GM23248 (cell line): ENCODE measurements at regions of chr14 and their contacts with region 1.

Region 1: DNA sequence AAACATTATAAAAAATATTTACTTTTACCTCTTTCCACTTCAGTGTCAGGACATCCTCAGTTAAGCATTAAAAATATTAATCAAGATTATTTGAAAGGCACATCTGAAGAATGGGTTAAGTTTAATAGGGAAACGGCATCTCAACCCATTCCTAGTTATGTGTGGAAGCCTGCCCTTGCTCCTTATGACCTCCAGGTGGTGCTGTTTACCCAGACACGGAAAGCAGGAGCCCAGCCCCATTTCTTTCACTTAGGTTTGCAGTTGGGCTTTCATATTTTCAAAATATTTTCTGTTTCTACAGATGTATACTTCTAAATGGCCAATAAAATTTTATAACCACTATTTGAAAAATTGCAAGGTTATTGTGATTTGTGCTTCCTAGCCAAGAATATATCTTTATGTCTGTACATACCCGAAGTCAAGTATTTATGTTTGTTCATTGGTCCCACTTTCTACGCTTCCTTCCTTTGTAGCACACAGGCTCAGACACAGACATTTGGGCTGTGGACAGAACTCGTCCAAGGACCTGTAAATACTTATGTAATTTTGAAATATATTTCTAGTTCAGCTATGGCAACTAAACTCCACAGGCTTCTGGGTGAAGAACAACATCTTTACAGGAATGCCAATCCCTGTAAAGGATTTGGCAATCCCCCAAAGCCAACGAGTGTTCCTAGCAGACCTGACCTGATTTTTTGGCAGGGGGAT is 247.1 kb downstream of the AKAP6 start:
- DNase-seq: peak; percentile 83
- H3K4me3 ChIP-seq: peak overlapping the region; percentile 56
- H3K27ac ChIP-seq: no peak overlapping the region
- H3K4me1 ChIP-seq: peaks cover 6% of the 10 kb centered on the region; the same call in 1 of the 2 replicates
- H3K27me3 ChIP-seq: no peaks in the 10 kb centered on the region; the same call in 1 of the 2 replicates

Region 2: GRCh38 chr14:32998433-32998832 is 422.2 kb after region 1 on chr14:
- in situ Hi-C with region 1: loop called (anchors 25 kb)
- DNase-seq: peak; percentile 54
- H3K4me3 ChIP-seq: no peak overlapping the region
- H3K27ac ChIP-seq: no peak overlapping the region
- H3K4me1 ChIP-seq: no peaks in the 10 kb centered on the region
- H3K27me3 ChIP-seq: no peaks in the 10 kb centered on the region

Region 3: GRCh38 chr14:33432407-33433023 is 856.3 kb after region 1 on chr14:
- in situ Hi-C with region 1: loop called (anchors 25 kb)
- DNase-seq: peak; percentile 70
- H3K4me3 ChIP-seq: no peak overlapping the region
- H3K27ac ChIP-seq: no peak overlapping the region
- H3K4me1 ChIP-seq: peaks cover 9% of the 10 kb centered on the region
- H3K27me3 ChIP-seq: no peaks in the 10 kb centered on the region

Region 4: GRCh38 chr14:33792720-33793368 is 1216.6 kb after region 1 on chr14:
- in situ Hi-C with region 1: loop called (anchors 10 kb)
- DNase-seq: peak; percentile 88
- H3K4me3 ChIP-seq: peak overlapping the region; percentile 58
- H3K27ac ChIP-seq: no peak overlapping the region
- H3K4me1 ChIP-seq: peaks cover 31% of the 10 kb centered on the region
- H3K27me3 ChIP-seq: no peaks in the 10 kb centered on the region

Region 5: GRCh38 chr14:34300882-34301734 is 1724.9 kb after region 1 on chr14:
- in situ Hi-C with region 1: loop called (anchors 10 kb)
- DNase-seq: peak; percentile 65
- H3K4me3 ChIP-seq: no peak overlapping the region
- H3K27ac ChIP-seq: no peak overlapping the region
- H3K4me1 ChIP-seq: no peaks in the 10 kb centered on the region
- H3K27me3 ChIP-seq: 0 out of 2 replicates have a peak, but pooled peaks cover 7% of the 10 kb centered on the region